H1 (cell line): ENCODE measurements at regions of chr7 and their contacts with region 1.

Region 1: DNA sequence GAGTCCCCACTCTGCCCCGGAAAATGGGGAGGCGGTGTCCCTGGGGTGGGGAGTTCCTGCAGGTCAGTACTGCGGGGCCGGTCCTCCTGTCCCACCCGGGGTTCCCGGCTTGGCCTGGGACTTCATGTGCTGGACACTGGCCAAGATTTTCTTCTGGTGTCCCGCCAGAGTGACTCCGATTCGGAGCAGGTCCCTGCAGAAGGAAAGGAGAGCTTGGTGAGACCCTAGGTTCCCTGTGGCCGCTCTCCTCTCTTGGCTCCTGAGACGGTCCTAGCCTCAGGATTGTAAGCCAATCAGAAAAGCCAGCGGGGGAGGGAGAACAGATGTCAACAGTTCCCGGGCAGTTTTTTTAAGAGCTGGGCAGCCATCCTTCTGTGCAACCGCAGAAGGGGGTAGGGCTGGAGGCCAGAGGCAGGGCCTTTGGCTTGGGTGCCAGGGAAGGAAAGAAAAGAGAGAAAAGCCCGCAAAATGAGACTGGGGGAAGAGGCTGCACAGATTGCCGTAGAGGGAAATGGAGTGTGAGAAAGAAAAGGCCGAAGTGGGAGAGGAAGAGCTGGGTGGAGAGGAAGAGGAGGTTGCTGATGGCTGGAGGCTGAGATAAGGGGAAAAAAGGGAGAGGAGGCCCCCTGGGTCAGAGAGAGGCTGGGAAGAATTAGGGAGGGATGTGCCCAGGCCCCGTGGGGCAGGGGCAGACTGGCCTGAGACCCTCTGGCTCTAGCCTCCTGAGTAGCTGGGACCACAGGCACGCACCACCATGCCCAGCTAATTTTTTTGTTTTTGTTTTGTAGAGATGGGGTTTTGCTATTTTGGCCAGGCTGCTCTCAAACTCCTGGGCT is 23.7 kb downstream of the EPHB4 start:
- DNase-seq: peak in 1 of 2 experiments; percentile 63
- H3K4me3 ChIP-seq: no peak overlapping the region
- H3K27ac ChIP-seq: no peak overlapping the region
- H3K4me1 ChIP-seq: peaks cover 0 to 8% (median 3%) of the 10 kb centered on the region in 4 experiments; a peak in 5 of 7 replicates
- H3K27me3 ChIP-seq: no peaks in the 10 kb centered on the region
- CTCF ChIP-seq: no peak
- EP300 ChIP-seq: no peak
- POLR2A ChIP-seq: no peak
- RAD21 ChIP-seq: no peak

Region 2: GRCh38 chr7:100726996-100727761 is 76.4 kb before region 1 on chr7:
- CTCF ChIA-PET with region 1: interaction called, 23 read pairs
- POLR2A ChIA-PET with region 1: interaction called, 4 read pairs
- DNase-seq: no peak
- H3K4me3 ChIP-seq: no peak overlapping the region
- H3K27ac ChIP-seq: no peak overlapping the region
- H3K4me1 ChIP-seq: no peaks in the 10 kb centered on the region
- H3K27me3 ChIP-seq: no peaks in the 10 kb centered on the region; a peak in 3 of 7 replicates
- CTCF ChIP-seq: no peak
- EP300 ChIP-seq: no peak
- POLR2A ChIP-seq: no peak
- RAD21 ChIP-seq: no peak

Region 3: DNA sequence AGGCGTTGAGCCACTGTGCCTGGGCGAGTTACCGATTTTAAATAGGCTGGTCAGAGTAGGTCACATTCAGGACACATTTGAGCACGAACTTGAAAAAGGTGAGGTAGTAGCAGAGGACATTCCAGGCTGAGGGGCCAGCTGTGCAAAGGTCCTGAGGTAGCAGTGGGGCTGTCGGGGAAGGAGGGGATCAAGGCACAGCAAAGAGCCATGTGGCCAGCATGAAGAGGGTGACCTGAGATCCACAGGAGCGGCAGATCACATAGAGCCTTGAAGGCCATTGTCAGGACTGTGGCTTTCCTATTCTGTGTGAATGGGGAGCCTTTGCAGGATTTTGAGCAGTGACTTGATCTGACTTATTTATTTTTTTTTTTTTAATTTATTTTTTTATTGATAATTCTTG is 63.7 kb before region 1 on chr7:
- CTCF ChIA-PET with region 1: no interaction called
- POLR2A ChIA-PET with region 1: no interaction called
- DNase-seq: no peak
- H3K4me3 ChIP-seq: no peak overlapping the region
- H3K27ac ChIP-seq: no peak overlapping the region
- H3K4me1 ChIP-seq: no peaks in the 10 kb centered on the region
- H3K27me3 ChIP-seq: no peaks in the 10 kb centered on the region
- CTCF ChIP-seq: no peak
- EP300 ChIP-seq: no peak
- POLR2A ChIP-seq: no peak
- RAD21 ChIP-seq: no peak

Region 4: DNA sequence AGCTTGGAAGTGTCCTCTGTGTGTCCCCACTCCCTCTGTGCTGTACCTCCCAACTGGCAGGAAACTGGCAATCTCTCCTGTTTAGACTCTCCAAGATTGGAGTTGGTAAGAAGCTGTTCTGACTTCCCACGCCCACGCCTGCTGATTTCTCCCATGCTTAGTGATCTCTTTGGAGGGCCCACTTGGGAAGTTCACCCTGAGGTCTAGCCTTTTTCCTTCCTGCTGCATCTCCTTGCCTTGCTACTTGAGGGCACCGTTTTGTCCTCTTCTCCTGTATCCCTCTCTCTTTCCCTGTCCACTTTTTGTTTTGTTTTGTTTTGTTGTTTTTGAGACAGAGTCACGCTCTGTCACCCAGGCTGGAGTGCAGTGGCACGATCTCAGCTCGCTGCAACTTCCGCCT is 34.8 kb before region 1 on chr7:
- CTCF ChIA-PET with region 1: interaction called, 12 read pairs
- POLR2A ChIA-PET with region 1: interaction called, 3 read pairs
- DNase-seq: no peak
- H3K4me3 ChIP-seq: no peak overlapping the region
- H3K27ac ChIP-seq: no peak overlapping the region
- H3K4me1 ChIP-seq: peaks cover 0 to 2% (median 0%) of the 10 kb centered on the region in 4 experiments; a peak in 3 of 7 replicates
- H3K27me3 ChIP-seq: no peaks in the 10 kb centered on the region; a peak in 1 of 7 replicates
- CTCF ChIP-seq: no peak
- EP300 ChIP-seq: no peak
- POLR2A ChIP-seq: no peak
- RAD21 ChIP-seq: no peak

Region 5: DNA sequence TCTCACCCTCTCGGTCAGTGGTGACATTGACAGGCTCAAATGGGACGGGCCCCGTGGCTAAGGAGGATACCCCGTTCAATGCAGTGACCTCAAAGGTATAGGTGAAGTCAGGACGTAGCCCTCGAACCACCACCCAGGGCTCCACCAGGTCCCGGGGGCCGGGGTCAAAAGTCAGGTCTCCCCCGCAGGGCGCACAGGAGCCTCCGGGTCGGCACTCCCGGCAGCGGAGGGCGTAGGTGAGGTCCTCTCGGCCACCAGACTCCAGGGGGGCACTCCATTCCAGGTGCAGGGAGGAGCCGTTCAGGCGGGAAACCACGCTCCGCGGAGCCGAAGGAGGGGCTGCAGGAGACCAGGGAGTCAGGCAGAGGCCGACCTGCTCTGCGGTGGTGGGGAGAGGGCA is 15.9 kb after region 1 on chr7:
- CTCF ChIA-PET with region 1: interaction called, 117 read pairs
- POLR2A ChIA-PET with region 1: interaction called, 124 read pairs
- DNase-seq: no peak
- H3K4me3 ChIP-seq: no peak overlapping the region
- H3K27ac ChIP-seq: no peak overlapping the region
- H3K4me1 ChIP-seq: peaks cover 0 to 3% (median under 1%) of the 10 kb centered on the region in 4 experiments; a peak in 1 of 7 replicates
- H3K27me3 ChIP-seq: no peaks in the 10 kb centered on the region
- CTCF ChIP-seq: no peak
- EP300 ChIP-seq: no peak
- POLR2A ChIP-seq: no peak
- RAD21 ChIP-seq: no peak

Region 6: GRCh38 chr7:100837099-100837836 is 33.7 kb after region 1 on chr7:
- CTCF ChIA-PET with region 1: interaction called, 36 read pairs
- POLR2A ChIA-PET with region 1: interaction called, 22 read pairs
- DNase-seq: peak; percentile 83 to 88
- H3K4me3 ChIP-seq: peak overlapping the region; percentile 29 to 67 (median 56)
- H3K27ac ChIP-seq: peak overlapping the region; percentile 94
- H3K4me1 ChIP-seq: peaks cover 3 to 10% (median 8%) of the 10 kb centered on the region in 4 experiments
- H3K27me3 ChIP-seq: no peaks in the 10 kb centered on the region
- CTCF ChIP-seq: no peak
- EP300 ChIP-seq: no peak
- POLR2A ChIP-seq: no peak; a peak in 1 of 3 replicates
- RAD21 ChIP-seq: no peak

Region 7: DNA sequence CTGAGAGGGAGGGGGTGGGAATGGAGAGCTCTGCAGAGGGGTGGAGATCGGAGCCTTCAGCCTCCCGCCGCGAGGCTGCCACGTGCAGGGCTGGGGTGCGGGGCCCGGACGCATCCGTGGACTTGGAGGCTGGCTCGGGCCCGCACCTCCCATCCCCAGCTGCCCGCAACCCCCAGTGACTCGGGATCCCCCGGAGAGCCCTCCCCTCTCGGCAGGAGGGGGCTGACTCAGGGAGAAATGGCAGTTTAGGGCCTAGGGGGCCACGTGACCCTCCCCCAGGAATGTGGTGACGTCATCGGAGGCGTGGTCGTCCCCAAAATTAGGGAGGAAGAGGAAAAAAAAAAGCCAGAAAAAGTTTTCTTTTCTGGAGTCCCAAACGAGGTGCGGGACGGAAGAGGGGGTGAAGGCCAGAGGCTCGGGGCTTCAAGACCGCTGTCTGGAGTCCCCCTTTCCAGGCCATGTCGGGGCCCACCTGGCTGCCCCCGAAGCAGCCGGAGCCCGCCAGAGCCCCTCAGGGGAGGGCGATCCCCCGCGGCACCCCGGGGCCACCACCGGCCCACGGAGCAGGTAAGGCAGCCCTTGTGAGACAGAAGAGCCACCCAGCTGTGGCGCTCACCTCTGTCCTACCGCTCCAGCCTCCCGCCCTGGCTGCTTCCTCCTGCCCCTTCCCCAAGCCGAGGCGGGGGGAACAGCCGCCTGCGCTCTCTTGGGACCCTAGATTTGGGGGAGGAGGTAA is 63.6 kb after region 1 on chr7 and contains the start of gene TRIP6:
- CTCF ChIA-PET with region 1: interaction called, 25 read pairs
- POLR2A ChIA-PET with region 1: interaction called, 5 read pairs
- DNase-seq: peak; percentile 64 to 97
- H3K4me3 ChIP-seq: peak within 1 kb of the TSS; percentile 68 to 93 (median 83)
- H3K27ac ChIP-seq: peak within 1 kb of the TSS; percentile 94
- H3K4me1 ChIP-seq: peaks cover 2 to 16% (median 11%) of the 10 kb centered on the region in 4 experiments
- H3K27me3 ChIP-seq: no peaks in the 10 kb centered on the region
- CTCF ChIP-seq: no peak
- EP300 ChIP-seq: peak in 1 of 2 experiments; percentile 73; a peak in 1 of 3 replicates
- POLR2A ChIP-seq: peak in 1 of 2 experiments; percentile 73; a peak in 2 of 3 replicates
- RAD21 ChIP-seq: no peak
- total RNA-seq, gene TRIP6: 103 and 109 TPM in 2 replicates

Region 8: GRCh38 chr7:100900978-100901377 is 97.4 kb after region 1 on chr7:
- CTCF ChIA-PET with region 1: no interaction called
- POLR2A ChIA-PET with region 1: no interaction called
- DNase-seq: no peak
- H3K4me3 ChIP-seq: no peak overlapping the region
- H3K27ac ChIP-seq: no peak overlapping the region
- H3K4me1 ChIP-seq: peaks cover 0 to 5% (median 3%) of the 10 kb centered on the region in 4 experiments; a peak in 6 of 7 replicates
- H3K27me3 ChIP-seq: peaks cover 8 to 14% (median 11%) of the 10 kb centered on the region in 4 experiments
- CTCF ChIP-seq: no peak
- EP300 ChIP-seq: no peak
- POLR2A ChIP-seq: no peak
- RAD21 ChIP-seq: no peak

Region 9: GRCh38 chr7:101494602-101495329 is 691.1 kb after region 1 on chr7:
- CTCF ChIA-PET with region 1: no interaction called
- POLR2A ChIA-PET with region 1: no interaction called
- DNase-seq: no peak
- H3K4me3 ChIP-seq: no peak overlapping the region; a peak in 1 of 8 replicates
- H3K27ac ChIP-seq: no peak overlapping the region
- H3K4me1 ChIP-seq: peaks cover 4 to 16% (median 8%) of the 10 kb centered on the region in 4 experiments
- H3K27me3 ChIP-seq: no peaks in the 10 kb centered on the region
- CTCF ChIP-seq: no peak
- EP300 ChIP-seq: no peak
- POLR2A ChIP-seq: no peak
- RAD21 ChIP-seq: no peak